ENCODE measurements at regions of chr10 and their contacts with region 1.

Region 1: GRCh38 chr10:101141616-101142532 is 10.8 kb downstream of the TLX1 start:
- DNase-seq: peak; percentile 72
- ATAC-seq: peak; percentile 95
- H3K4me3 ChIP-seq: no peak overlapping the region
- H3K27ac ChIP-seq: no peak overlapping the region
- H3K4me1 ChIP-seq: no peaks in the 10 kb centered on the region
- H3K27me3 ChIP-seq: peaks cover 92% of the 10 kb centered on the region
- CTCF ChIP-seq: peak; percentile 96
- POLR2A ChIP-seq: no peak
- RAD21 ChIP-seq: peak; percentile 87

Region 2: DNA sequence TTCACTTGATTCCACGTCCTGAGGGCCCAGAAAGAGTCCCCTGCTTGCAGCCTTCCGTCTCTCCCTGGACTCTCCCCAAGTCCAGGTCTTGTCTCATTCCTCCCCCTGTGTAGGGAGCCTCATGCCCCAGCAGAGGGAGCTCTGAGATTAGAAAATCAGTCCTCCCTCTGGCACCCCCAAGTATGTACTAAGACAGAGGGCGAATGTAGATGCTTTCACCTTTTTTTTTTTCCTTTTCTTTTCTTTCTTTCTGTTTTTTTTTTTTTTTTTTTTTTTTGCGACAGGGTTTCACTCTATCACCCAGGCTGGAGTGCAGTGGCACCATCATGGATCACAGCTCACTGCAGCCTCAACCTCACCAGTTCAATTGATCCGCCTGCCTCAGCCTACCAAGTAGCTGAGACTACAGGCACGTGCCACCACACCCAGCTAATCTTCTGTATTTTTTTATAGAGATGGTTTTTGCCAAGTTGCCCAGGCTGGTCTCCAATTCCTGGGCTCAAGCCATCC is 100.6 kb before region 1 on chr10:
- CTCF ChIA-PET with region 1: interaction called, 4 read pairs
- POLR2A ChIA-PET with region 1: no interaction called
- dilution Hi-C with region 1: no loop called
- in situ Hi-C with region 1: no loop called
- intact Hi-C with region 1: loop called (anchors 1 kb)
- DNase-seq: peak; percentile 88
- ATAC-seq: peak; percentile 73
- H3K4me3 ChIP-seq: no peak overlapping the region
- H3K27ac ChIP-seq: no peak overlapping the region
- H3K4me1 ChIP-seq: peaks cover 10% of the 10 kb centered on the region
- H3K27me3 ChIP-seq: no peaks in the 10 kb centered on the region
- CTCF ChIP-seq: peak; percentile 92
- POLR2A ChIP-seq: no peak
- RAD21 ChIP-seq: peak; percentile 86

Region 3: DNA sequence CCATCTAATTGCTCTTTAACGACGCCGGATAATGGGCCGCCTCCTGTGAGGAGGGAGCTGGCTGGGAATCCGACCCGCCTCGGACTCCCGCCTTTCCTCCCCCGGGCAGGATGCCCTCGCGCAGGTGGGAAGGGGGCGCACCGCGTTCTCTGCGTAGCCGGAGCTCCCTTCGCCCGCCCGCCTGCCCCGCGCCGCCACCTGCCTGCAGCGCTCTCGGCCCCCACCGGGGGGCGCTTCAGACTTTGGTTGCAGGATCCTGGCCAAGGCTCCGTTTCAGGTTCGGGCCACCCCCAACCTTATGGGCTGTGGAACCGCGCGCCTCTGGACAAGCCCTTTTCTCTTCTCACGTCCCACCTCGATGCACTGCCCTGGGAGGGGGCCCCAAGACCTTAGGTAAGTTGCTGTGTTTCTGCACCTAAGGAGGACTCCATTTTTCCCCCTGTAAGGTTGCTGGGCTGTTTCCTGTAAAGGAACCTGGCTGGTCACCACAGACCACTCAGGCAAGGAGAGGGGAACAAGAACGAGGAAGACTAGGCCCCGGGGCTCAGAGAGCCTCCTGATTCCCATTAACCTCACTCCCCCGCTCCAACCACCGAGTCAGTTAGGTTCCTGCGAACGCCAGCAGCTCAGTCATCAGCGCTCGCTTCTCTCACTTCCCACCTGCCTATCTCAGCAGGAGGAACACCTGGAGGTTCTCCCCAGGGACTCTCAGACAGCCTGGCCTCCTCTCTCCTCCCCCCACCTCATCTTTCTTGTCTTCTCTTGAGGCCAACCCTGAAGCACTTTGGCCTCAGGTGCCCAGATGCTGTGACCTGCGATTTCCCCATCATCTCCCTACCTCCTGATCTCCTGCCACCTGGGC is 91.4 kb before region 1 on chr10:
- CTCF ChIA-PET with region 1: interaction called, 15 read pairs
- POLR2A ChIA-PET with region 1: no interaction called
- dilution Hi-C with region 1: no loop called
- in situ Hi-C with region 1: no loop called
- intact Hi-C with region 1: no loop called
- DNase-seq: no peak
- ATAC-seq: peak; percentile 77
- H3K4me3 ChIP-seq: peak overlapping the region; percentile 29; the same call in 1 of the 2 replicates
- H3K27ac ChIP-seq: no peak overlapping the region
- H3K4me1 ChIP-seq: peaks cover 11% of the 10 kb centered on the region
- H3K27me3 ChIP-seq: peaks cover 19% of the 10 kb centered on the region
- CTCF ChIP-seq: peak; percentile 79
- POLR2A ChIP-seq: no peak
- RAD21 ChIP-seq: peak; percentile 62

Region 4: GRCh38 chr10:101060036-101060950 is 81.6 kb before region 1 on chr10:
- CTCF ChIA-PET with region 1: interaction called, 9 read pairs
- POLR2A ChIA-PET with region 1: interaction called, 3 read pairs
- dilution Hi-C with region 1: no loop called
- in situ Hi-C with region 1: no loop called
- intact Hi-C with region 1: loop called (anchors 2 kb)
- DNase-seq: peak; percentile 95
- ATAC-seq: peak; percentile 68
- H3K4me3 ChIP-seq: peak overlapping the region; percentile 81
- H3K27ac ChIP-seq: peak overlapping the region; percentile 97
- H3K4me1 ChIP-seq: peaks cover 15% of the 10 kb centered on the region
- H3K27me3 ChIP-seq: no peaks in the 10 kb centered on the region
- CTCF ChIP-seq: peak; percentile 85
- POLR2A ChIP-seq: no peak
- RAD21 ChIP-seq: peak; percentile 79

Region 5: GRCh38 chr10:101095542-101096213 is 46.2 kb before region 1 on chr10:
- CTCF ChIA-PET with region 1: interaction called, 12 read pairs
- POLR2A ChIA-PET with region 1: no interaction called
- dilution Hi-C with region 1: no loop called
- in situ Hi-C with region 1: loop called (anchors 5 kb)
- intact Hi-C with region 1: loop called (anchors 1 kb)
- DNase-seq: peak; percentile 44
- ATAC-seq: peak; percentile 95
- H3K4me3 ChIP-seq: no peak overlapping the region
- H3K27ac ChIP-seq: no peak overlapping the region
- H3K4me1 ChIP-seq: 0 out of 2 replicates have a peak, but pooled peaks cover 2% of the 10 kb centered on the region
- H3K27me3 ChIP-seq: peaks cover 77% of the 10 kb centered on the region
- CTCF ChIP-seq: peak; percentile 73
- POLR2A ChIP-seq: no peak
- RAD21 ChIP-seq: peak; percentile 57

Region 6: DNA sequence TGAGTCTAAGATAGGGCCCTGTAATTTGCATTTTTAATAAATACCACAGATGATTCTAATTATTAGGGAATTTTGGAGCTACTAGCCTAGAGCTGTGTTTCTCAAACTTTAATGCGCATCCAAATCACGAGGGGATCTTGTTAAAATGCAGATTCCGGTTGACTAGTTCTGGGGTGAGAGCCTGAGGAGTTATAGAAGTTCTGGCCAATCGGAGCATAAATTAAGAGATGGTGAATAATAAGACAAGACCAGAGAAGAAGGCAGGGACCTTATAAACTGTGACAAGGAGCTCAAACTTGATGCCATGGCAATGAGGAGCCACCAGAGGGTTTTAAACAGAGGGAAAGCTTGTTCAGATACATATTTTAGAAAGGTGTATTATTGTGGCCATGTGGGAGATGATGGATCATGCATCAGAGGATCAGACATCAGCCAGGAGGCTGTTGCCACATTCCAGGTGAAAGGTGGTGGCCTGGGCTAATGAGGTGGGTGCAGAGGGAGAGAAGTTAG is 40.4 kb before region 1 on chr10:
- CTCF ChIA-PET with region 1: interaction called, 12 read pairs
- POLR2A ChIA-PET with region 1: no interaction called
- dilution Hi-C with region 1: no loop called
- in situ Hi-C with region 1: loop called (anchors 5 kb)
- intact Hi-C with region 1: no loop called
- DNase-seq: no peak
- ATAC-seq: no peak
- H3K4me3 ChIP-seq: no peak overlapping the region
- H3K27ac ChIP-seq: no peak overlapping the region
- H3K4me1 ChIP-seq: no peaks in the 10 kb centered on the region
- H3K27me3 ChIP-seq: peaks cover 69% of the 10 kb centered on the region
- CTCF ChIP-seq: no peak
- POLR2A ChIP-seq: no peak
- RAD21 ChIP-seq: no peak

Measured in IMR-90 (cell line).